Esophagus muscularis mucosa (tissue), 4 donors: ENCODE measurements at regions of chr2 and their contacts with region 1.

Region 1: DNA sequence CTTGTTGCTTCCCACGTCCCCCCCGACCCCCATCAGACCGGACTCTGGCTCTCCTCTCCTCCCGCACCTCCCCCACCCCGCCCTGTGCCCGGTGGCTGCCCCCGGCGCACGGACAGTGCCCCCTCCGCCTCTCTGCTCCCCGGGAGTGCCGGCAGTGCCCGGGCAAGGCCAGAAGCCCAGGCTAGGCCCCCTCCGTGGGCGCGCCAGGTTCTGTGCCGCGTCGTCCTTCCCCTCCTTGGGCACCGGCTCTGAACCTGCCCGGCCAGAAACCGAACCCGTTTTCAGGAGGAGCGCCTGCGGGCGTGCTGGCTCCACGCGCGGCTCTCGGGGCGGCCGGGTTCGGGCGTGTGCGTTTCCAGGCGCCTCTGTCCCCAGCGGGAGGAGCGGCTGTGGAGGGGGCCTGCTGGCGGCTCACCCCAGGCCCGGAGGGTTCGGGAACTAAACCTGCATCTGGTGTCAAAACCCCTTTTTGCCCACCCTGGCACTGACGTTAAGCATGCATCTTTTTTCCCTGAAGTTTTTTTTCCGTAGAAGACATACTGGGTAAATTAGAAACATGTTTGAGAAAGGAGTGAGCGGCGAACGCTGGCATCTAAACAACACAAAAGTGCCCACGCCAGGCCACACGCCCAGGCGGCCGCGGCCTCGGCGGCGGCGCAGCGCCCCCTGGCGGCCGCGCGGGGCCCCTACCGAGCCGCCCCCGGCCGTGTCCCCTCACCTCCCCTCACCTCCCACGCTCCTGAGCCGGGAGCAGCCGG is 123.9 kb upstream of the SLC1A4 start:
- DNase-seq: no peak
- H3K4me3 ChIP-seq: peak overlapping the region; percentile 67 to 80 (median 72)
- H3K27ac ChIP-seq: peak overlapping the region; percentile 87 to 92 (median 90)
- H3K4me1 ChIP-seq: peaks cover 10 to 32% (median 21%) of the 10 kb centered on the region in 4 donors
- H3K27me3 ChIP-seq: no peaks in the 10 kb centered on the region
- CTCF ChIP-seq: peak; percentile 89 to 97 (median 96)
- EP300 ChIP-seq: no peak
- POLR2A ChIP-seq: no peak

Region 2: GRCh38 chr2:64523666-64524603 is 341.3 kb before region 1 on chr2 and contains the start of gene AFTPH:
- intact Hi-C with region 1: loop called (anchors 2 kb)
- DNase-seq: peak; percentile 99
- H3K4me3 ChIP-seq: peak within 1 kb of the TSS; percentile 82 to 96 (median 94)
- H3K27ac ChIP-seq: peak within 1 kb of the TSS; percentile 96 to 97 (median 97)
- H3K4me1 ChIP-seq: peaks cover 22 to 45% (median 41%) of the 10 kb centered on the region in 4 donors
- H3K27me3 ChIP-seq: no peaks in the 10 kb centered on the region
- CTCF ChIP-seq: peak in 2 of 3 experiments; percentile 4 to 30
- EP300 ChIP-seq: no peak
- POLR2A ChIP-seq: peak; percentile 87
- total RNA-seq, gene AFTPH: 27.5 to 36.1 (median 35.7) TPM

Region 3: DNA sequence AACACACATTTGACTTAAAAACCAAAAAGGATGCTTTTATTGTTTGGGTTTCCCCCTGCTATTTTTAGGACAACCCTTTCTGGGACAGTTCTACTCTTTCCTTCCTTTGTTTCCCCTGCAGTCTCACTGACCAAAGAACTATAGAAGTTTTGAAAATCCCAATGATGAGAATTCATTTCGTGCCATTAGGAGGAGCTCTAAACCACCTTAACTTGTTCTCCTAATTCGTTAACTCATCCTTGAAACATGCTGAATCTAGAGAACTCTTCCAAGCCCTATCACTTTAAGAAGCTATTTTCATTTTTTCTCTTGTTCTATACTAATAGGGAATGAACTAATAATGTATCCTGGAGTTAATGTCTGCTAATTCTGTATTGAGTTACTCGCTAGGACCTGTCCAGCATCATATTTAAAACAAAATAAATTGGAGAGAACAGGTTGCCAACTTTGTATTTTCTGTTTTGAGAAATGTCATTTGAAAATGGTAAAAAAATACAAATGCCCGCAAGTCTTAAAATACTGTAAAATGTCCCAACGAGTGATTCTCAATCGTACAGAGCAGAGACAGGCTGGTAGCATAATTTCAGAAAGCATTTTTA is 278.3 kb before region 1 on chr2:
- intact Hi-C with region 1: loop called (anchors 2 kb)
- DNase-seq: no peak
- H3K4me3 ChIP-seq: no peak overlapping the region
- H3K27ac ChIP-seq: no peak overlapping the region
- H3K4me1 ChIP-seq: peaks cover 0 to 5% (median 0%) of the 10 kb centered on the region in 4 donors
- H3K27me3 ChIP-seq: no peaks in the 10 kb centered on the region
- CTCF ChIP-seq: peak; percentile 64 to 69 (median 67)
- EP300 ChIP-seq: no peak
- POLR2A ChIP-seq: no peak

Region 4: DNA sequence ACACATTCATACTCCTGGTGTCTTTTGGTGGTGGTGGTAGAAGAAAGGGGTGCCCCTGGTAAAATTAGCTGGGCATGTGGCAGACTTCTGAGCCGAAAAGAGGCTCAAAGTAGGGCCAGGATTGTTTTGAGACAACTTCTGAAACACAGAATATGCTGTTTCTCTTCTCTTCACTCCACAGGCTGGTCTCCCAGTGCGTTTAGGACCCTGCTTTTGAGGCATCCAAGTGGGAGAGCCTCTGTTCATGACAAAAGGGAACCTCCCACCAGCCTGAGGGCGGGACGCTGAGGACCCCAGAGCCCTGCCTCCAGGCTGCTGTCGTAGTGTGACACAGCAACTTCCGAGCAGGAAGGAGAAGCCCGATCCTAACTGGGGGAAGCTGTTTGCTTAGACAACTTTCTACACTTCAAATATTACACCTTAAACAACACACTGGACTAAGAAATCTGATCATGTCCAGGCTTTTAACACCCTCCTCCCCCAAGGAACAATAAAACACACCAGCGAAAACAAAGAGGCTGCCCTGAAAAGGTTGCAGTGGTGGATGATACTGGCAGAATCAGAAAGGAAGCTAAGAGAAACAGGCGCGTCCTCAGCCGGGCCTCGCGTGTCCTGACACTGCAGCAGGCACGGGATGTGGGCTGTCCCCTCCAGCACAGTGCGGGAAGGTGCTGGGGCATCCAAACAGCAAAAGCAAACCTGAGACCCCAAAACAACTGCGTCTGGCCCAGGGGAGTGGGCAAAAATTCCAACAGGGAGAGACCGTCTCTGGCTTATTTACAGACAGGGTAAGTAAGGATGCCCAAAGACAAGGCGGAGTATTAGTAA is 220.9 kb before region 1 on chr2:
- intact Hi-C with region 1: loop called (anchors 2 kb)
- DNase-seq: no peak
- H3K4me3 ChIP-seq: peak overlapping the region; percentile 51 to 58 (median 53)
- H3K27ac ChIP-seq: peak overlapping the region; percentile 87 to 92 (median 89)
- H3K4me1 ChIP-seq: peaks cover 62 to 88% (median 83%) of the 10 kb centered on the region in 4 donors
- H3K27me3 ChIP-seq: no peaks in the 10 kb centered on the region
- CTCF ChIP-seq: no peak
- EP300 ChIP-seq: peak; percentile 13
- POLR2A ChIP-seq: peak; percentile 74

Region 5: GRCh38 chr2:64711252-64711800 is 153.9 kb before region 1 on chr2:
- intact Hi-C with region 1: no loop called
- DNase-seq: no peak
- H3K4me3 ChIP-seq: no peak overlapping the region
- H3K27ac ChIP-seq: no peak overlapping the region
- H3K4me1 ChIP-seq: no peaks in the 10 kb centered on the region
- H3K27me3 ChIP-seq: no peaks in the 10 kb centered on the region
- CTCF ChIP-seq: no peak
- EP300 ChIP-seq: no peak
- POLR2A ChIP-seq: no peak

Region 6: DNA sequence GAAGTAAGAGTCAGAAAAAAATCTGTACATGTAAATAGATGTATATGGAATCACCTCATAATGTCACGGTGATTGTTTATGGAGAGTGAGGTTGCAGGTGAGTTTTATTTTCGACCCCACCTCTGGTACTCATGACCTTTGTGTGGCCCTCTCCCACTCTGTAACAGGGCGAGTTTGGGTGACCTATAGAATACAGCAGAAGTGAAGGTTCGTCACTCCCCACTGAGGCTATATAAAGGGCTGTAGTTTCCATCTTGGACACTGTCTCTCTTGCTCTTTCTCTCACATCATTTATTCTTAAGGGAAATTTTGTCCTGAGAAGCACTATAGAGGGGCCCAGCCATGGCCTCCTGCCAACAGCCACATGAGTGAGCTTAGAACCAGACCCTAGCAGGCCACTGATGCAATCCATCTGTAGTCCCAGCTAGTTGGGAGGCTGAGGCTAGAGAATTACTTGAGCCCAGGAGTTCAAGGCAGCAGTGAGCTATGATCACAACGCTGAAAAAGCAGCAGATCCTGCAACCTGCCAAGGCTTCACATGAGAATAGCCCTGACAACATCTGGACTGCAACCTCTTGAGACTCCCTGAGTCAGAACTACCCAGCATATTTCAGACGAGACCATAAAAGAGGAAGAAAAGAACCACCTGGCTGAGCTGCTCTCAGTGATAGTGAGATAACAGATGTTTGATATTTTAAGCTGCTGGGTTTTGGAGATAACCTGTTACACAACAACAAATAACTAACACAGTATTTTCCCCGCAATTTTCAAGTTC is 49.7 kb after region 1 on chr2:
- intact Hi-C with region 1: no loop called
- DNase-seq: no peak
- H3K4me3 ChIP-seq: no peak overlapping the region
- H3K27ac ChIP-seq: no peak overlapping the region
- H3K4me1 ChIP-seq: peaks cover 3 to 7% (median 6%) of the 10 kb centered on the region in 4 donors
- H3K27me3 ChIP-seq: no peaks in the 10 kb centered on the region
- CTCF ChIP-seq: no peak
- EP300 ChIP-seq: no peak
- POLR2A ChIP-seq: no peak